ENCODE measurements at regions of chr6 and their contacts with region 1.

Region 1: DNA sequence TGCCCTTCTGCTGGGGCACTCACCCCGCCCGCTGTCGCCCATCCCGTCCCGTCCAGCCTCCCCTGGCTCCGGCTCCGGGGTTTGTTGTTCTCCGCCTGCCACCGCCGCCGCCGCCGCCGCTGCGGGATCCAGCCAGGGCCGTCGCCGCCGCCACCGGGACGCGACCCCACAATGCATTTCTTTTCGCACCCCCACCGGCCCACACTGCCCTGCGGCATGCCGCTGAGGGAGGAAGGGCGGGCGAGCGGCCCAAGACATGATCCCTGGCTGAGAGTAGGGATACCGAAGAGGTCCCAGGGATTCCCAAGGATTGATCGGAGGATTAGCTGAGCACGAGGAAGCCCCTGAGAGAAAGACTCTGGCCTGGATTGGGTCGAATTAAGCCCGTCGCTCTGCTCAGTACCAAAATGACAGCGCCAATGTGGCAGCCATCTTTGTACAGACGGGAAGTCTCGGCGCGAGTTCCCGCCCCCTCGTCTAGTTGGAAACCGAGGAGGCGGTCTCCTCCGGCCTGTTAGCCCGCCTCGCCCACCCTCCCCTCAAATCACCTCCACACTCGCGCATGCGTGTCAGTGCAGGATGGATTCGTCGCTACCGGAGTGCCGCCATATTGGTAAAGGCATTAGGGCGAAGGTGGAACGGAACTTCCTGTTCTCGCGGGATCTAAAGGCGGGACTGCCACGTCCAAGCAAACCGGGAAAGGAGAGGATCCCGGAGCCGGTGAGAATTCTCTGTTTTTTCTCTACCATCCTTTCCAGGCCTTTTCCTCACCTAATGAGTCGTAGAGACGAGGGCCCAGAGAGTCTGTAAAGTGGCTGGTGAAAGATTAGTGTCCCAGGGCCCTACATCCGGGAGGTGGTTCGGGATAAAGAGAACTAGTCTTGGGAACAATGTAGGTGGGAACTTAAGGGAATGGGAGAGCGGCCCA is at the starts of genes RXRB and SLC39A7:
- DNase-seq: peak; percentile 88 to 99 (median 97)
- ATAC-seq: peak; percentile 85
- H3K4me3 ChIP-seq: peak within 1 kb of the TSS; percentile 89
- H3K4me3 Mint-ChIP-seq: peak within 1 kb of the TSS; percentile 95 to 100 (median 99)
- H3K27ac ChIP-seq: peak within 1 kb of the TSS; percentile 96
- H3K27ac Mint-ChIP-seq: peak within 1 kb of the TSS; percentile 97 to 99 (median 99)
- H3K4me1 ChIP-seq: peaks cover 32 to 37% of the 10 kb centered on the region in 2 donors
- H3K4me1 Mint-ChIP-seq: peaks cover 62 to 84% (median 73%) of the 10 kb centered on the region in 7 donors
- H3K27me3 ChIP-seq: no peaks in the 10 kb centered on the region
- H3K27me3 Mint-ChIP-seq: no peaks in the 10 kb centered on the region
- total RNA-seq, gene RXRB: 50.3 to 103 (median 76.2) TPM
- total RNA-seq, gene SLC39A7: 19.1 to 51.9 (median 27.9) TPM

Region 2: GRCh38 chr6:31739639-31740396 is 1460.7 kb before region 1 on chr6 and contains the start of gene MSH5:
- CTCF ChIA-PET with region 1: no interaction called
- POLR2A ChIA-PET with region 1: no interaction called
- intact Hi-C with region 1: loop called in 1 of 2 experiments (anchors 10 kb)
- DNase-seq: peak; percentile 82 to 97 (median 92)
- ATAC-seq: peak; percentile 93
- H3K4me3 ChIP-seq: peak within 1 kb of the TSS; percentile 68
- H3K4me3 Mint-ChIP-seq: peak within 1 kb of the TSS; percentile 86 to 100 (median 98)
- H3K27ac ChIP-seq: peak within 1 kb of the TSS; percentile 69
- H3K27ac Mint-ChIP-seq: peak within 1 kb of the TSS; percentile 83 to 94 (median 90)
- H3K4me1 ChIP-seq: peaks cover 32 to 33% of the 10 kb centered on the region in 2 donors
- H3K4me1 Mint-ChIP-seq: peaks cover 41 to 69% (median 61%) of the 10 kb centered on the region in 7 donors
- H3K27me3 ChIP-seq: no peaks in the 10 kb centered on the region
- H3K27me3 Mint-ChIP-seq: no peaks in the 10 kb centered on the region
- total RNA-seq, gene MSH5: 10.3 to 52.2 (median 11.4) TPM

Region 3: GRCh38 chr6:32962213-32962826 is 238.2 kb before region 1 on chr6:
- CTCF ChIA-PET with region 1: no interaction called
- POLR2A ChIA-PET with region 1: no interaction called
- intact Hi-C with region 1: no loop called
- DNase-seq: no peak
- ATAC-seq: no peak
- H3K4me3 ChIP-seq: no peak overlapping the region
- H3K4me3 Mint-ChIP-seq: no peak overlapping the region
- H3K27ac ChIP-seq: no peak overlapping the region
- H3K27ac Mint-ChIP-seq: peak overlapping the region in 4 of 9 donors; percentile 18 to 76 (median 66)
- H3K4me1 ChIP-seq: peaks cover 21 to 25% of the 10 kb centered on the region in 2 donors
- H3K4me1 Mint-ChIP-seq: peaks cover 37 to 66% (median 64%) of the 10 kb centered on the region in 7 donors
- H3K27me3 ChIP-seq: no peaks in the 10 kb centered on the region
- H3K27me3 Mint-ChIP-seq: peaks cover 0 to 5% (median 0%) of the 10 kb centered on the region in 5 donors

Region 4: DNA sequence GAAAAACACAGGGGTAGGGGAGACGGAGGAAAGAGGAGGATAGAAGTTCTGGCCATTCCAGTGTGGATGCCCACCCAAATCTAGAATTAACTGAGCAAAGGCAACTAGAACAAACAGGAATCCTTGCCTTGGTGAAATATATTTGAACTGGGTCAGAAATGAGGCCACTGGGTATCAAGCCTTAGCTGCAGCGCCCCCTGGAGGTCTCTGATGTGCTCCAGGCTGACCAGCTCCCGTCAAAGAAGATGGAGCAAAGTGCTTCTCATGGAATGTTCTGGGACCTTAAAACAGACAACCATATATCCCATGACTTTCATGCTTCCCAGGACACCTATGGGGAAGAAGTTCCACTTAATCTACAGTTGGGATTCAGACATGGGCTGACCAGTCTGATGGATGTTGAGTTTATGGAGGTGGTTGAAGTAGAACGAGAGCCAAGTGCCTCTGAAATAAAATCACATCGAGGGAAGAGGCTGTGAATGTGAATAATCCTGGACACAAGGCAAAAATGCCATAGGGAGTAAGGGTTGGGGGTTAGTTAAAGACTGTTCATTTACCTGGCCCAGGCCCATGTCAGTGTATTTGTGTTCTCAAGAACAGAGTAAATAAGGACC is 74.3 kb before region 1 on chr6:
- CTCF ChIA-PET with region 1: no interaction called
- POLR2A ChIA-PET with region 1: no interaction called
- intact Hi-C with region 1: loop called in 1 of 2 experiments (anchors 5 kb)
- DNase-seq: peak in 7 of 9 donors; percentile 10 to 67 (median 33)
- ATAC-seq: peak; percentile 65
- H3K4me3 ChIP-seq: no peak overlapping the region
- H3K4me3 Mint-ChIP-seq: no peak overlapping the region
- H3K27ac ChIP-seq: no peak overlapping the region
- H3K27ac Mint-ChIP-seq: no peak overlapping the region
- H3K4me1 ChIP-seq: no peaks in the 10 kb centered on the region
- H3K4me1 Mint-ChIP-seq: peaks cover 0 to 25% (median 0%) of the 10 kb centered on the region in 7 donors
- H3K27me3 ChIP-seq: no peaks in the 10 kb centered on the region
- H3K27me3 Mint-ChIP-seq: peaks cover 6 to 18% (median 11%) of the 10 kb centered on the region in 5 donors

Region 5: GRCh38 chr6:33271458-33272274 is 71.2 kb after region 1 on chr6 and contains the starts of genes RPS18 and VPS52:
- CTCF ChIA-PET with region 1: interaction called, 3 read pairs
- POLR2A ChIA-PET with region 1: interaction called, 7 read pairs
- intact Hi-C with region 1: loop called (anchors 1 kb)
- DNase-seq: peak; percentile 84 to 97 (median 93)
- ATAC-seq: peak; percentile 91
- H3K4me3 ChIP-seq: peak within 1 kb of the TSS; percentile 93
- H3K4me3 Mint-ChIP-seq: peak within 1 kb of the TSS; percentile 87 to 100 (median 98)
- H3K27ac ChIP-seq: peak within 1 kb of the TSS; percentile 91
- H3K27ac Mint-ChIP-seq: peak within 1 kb of the TSS; percentile 95 to 100 (median 99)
- H3K4me1 ChIP-seq: peaks cover 41 to 44% of the 10 kb centered on the region in 2 donors
- H3K4me1 Mint-ChIP-seq: peaks cover 34 to 81% (median 66%) of the 10 kb centered on the region in 7 donors
- H3K27me3 ChIP-seq: no peaks in the 10 kb centered on the region
- H3K27me3 Mint-ChIP-seq: peaks cover 0 to 3% (median 0%) of the 10 kb centered on the region in 5 donors
- total RNA-seq, gene RPS18: 2,454 to 4,896 (median 3,431) TPM
- total RNA-seq, gene VPS52: 74.3 to 110 (median 90.5) TPM

Region 6: GRCh38 chr6:33344701-33345697 is 144.5 kb after region 1 on chr6:
- CTCF ChIA-PET with region 1: no interaction called
- POLR2A ChIA-PET with region 1: no interaction called
- intact Hi-C with region 1: loop called in 1 of 2 experiments (anchors 1 kb)
- DNase-seq: peak; percentile 28 to 87 (median 82)
- ATAC-seq: peak; percentile 60
- H3K4me3 ChIP-seq: peak overlapping the region; percentile 64
- H3K4me3 Mint-ChIP-seq: peak overlapping the region; percentile 68 to 89 (median 86)
- H3K27ac ChIP-seq: peak overlapping the region; percentile 60
- H3K27ac Mint-ChIP-seq: peak overlapping the region; percentile 88 to 99 (median 96)
- H3K4me1 ChIP-seq: peaks cover 23 to 33% of the 10 kb centered on the region in 2 donors
- H3K4me1 Mint-ChIP-seq: peaks cover 22 to 54% (median 41%) of the 10 kb centered on the region in 7 donors
- H3K27me3 ChIP-seq: no peaks in the 10 kb centered on the region
- H3K27me3 Mint-ChIP-seq: peaks cover 0 to 7% (median 0%) of the 10 kb centered on the region in 5 donors

Region 7: GRCh38 chr6:33454009-33454946 is 253.8 kb after region 1 on chr6 and contains the start of gene ZBTB9:
- CTCF ChIA-PET with region 1: no interaction called
- POLR2A ChIA-PET with region 1: no interaction called
- intact Hi-C with region 1: loop called in 1 of 2 experiments (anchors 1 kb)
- DNase-seq: peak; percentile 80 to 93 (median 92)
- ATAC-seq: peak; percentile 100
- H3K4me3 ChIP-seq: peak within 1 kb of the TSS; percentile 93
- H3K4me3 Mint-ChIP-seq: peak within 1 kb of the TSS; percentile 88 to 99 (median 95)
- H3K27ac ChIP-seq: peak within 1 kb of the TSS; percentile 88
- H3K27ac Mint-ChIP-seq: peak within 1 kb of the TSS; percentile 86 to 98 (median 92)
- H3K4me1 ChIP-seq: peaks cover 12 to 22% of the 10 kb centered on the region in 2 donors
- H3K4me1 Mint-ChIP-seq: peaks cover 21 to 57% (median 45%) of the 10 kb centered on the region in 7 donors
- H3K27me3 ChIP-seq: no peaks in the 10 kb centered on the region
- H3K27me3 Mint-ChIP-seq: no peaks in the 10 kb centered on the region
- total RNA-seq, gene ZBTB9: 3.3 to 14.0 (median 9.8) TPM

Region 8: GRCh38 chr6:33788694-33789549 is 588.4 kb after region 1 on chr6 and contains the start of gene LEMD2:
- CTCF ChIA-PET with region 1: no interaction called
- POLR2A ChIA-PET with region 1: no interaction called
- intact Hi-C with region 1: no loop called
- DNase-seq: peak; percentile 88 to 96 (median 91)
- ATAC-seq: peak; percentile 94
- H3K4me3 ChIP-seq: peak within 1 kb of the TSS; percentile 80
- H3K4me3 Mint-ChIP-seq: peak within 1 kb of the TSS; percentile 93 to 100 (median 98)
- H3K27ac ChIP-seq: peak within 1 kb of the TSS; percentile 92
- H3K27ac Mint-ChIP-seq: peak within 1 kb of the TSS; percentile 95 to 99 (median 97)
- H3K4me1 ChIP-seq: peaks cover 37 to 40% of the 10 kb centered on the region in 2 donors
- H3K4me1 Mint-ChIP-seq: peaks cover 40 to 55% (median 51%) of the 10 kb centered on the region in 7 donors
- H3K27me3 ChIP-seq: no peaks in the 10 kb centered on the region
- H3K27me3 Mint-ChIP-seq: peaks cover 0 to 25% (median 0%) of the 10 kb centered on the region in 5 donors
- total RNA-seq, gene LEMD2: 71.4 to 124 (median 118) TPM

Measured in naive thymus-derived CD4-positive, alpha-beta T cell (primary cell).